Activated CD4-positive, alpha-beta T cell treated with anti-CD3 and anti-CD28 coated beads for 36 hours (primary cell): ENCODE measurements at regions of chr3 and their contacts with region 1.

Region 1: GRCh38 chr3:18295171-18295920 is 129.8 kb downstream of the SATB1 start:
- DNase-seq: peak; percentile 71
- ATAC-seq: peak; percentile 89
- H3K4me3 Mint-ChIP-seq: no peak overlapping the region
- H3K27ac Mint-ChIP-seq: no peak overlapping the region
- H3K4me1 Mint-ChIP-seq: no peaks in the 10 kb centered on the region
- H3K27me3 Mint-ChIP-seq: no peaks in the 10 kb centered on the region

Region 2: GRCh38 chr3:17894434-17895060 is 400.8 kb before region 1 on chr3:
- CTCF ChIA-PET with region 1: no interaction called
- POLR2A ChIA-PET with region 1: no interaction called
- intact Hi-C with region 1: loop called in 1 of 2 experiments (anchors 1 kb)
- DNase-seq: peak; percentile 71
- ATAC-seq: peak; percentile 81
- H3K4me3 Mint-ChIP-seq: no peak overlapping the region
- H3K27ac Mint-ChIP-seq: no peak overlapping the region
- H3K4me1 Mint-ChIP-seq: no peaks in the 10 kb centered on the region
- H3K27me3 Mint-ChIP-seq: no peaks in the 10 kb centered on the region

Region 3: DNA sequence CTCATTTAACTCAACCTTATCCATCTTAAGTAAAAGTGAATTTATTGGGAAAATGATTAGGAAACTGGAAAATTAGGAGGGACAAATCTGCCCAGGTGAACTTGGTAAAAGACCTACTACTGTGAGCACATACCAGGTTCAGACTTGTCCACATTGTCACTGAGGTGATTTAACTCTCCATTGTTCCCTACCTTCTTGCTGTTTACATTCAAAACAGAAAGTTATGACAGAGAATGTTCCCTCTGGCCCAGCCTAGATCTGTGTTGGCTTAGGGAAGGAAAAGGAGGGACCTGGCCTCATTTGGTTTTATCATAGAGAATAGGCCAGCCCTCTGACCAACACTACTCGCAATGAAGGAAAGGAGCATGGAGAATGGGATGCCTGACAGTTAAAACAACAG is 12.2 kb after region 1 on chr3:
- CTCF ChIA-PET with region 1: no interaction called
- POLR2A ChIA-PET with region 1: no interaction called
- intact Hi-C with region 1: no loop called
- DNase-seq: no peak
- ATAC-seq: no peak
- H3K4me3 Mint-ChIP-seq: no peak overlapping the region
- H3K27ac Mint-ChIP-seq: no peak overlapping the region
- H3K4me1 Mint-ChIP-seq: no peaks in the 10 kb centered on the region
- H3K27me3 Mint-ChIP-seq: no peaks in the 10 kb centered on the region